H1 (cell line): ENCODE measurements at regions of chr7 and their contacts with region 1.

Region 1: DNA sequence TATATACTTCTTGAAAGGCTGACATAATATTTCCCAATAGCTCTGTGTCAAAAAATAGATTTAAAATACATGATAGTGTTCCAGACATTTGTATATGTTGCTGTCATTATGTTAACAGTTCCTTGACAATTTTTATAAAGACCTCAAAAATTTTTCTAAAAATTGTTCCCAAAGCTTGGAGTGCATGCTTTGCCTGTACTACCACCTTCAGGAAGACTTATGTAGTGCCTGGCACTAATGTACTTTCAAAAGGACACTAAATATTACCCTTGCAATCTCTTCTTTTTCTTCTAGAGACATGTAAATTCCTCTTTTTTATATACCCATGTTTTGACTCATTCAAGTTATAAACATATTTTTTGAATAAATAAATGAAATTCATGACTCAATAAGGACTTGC is 48.0 kb upstream of the SP8 start:
- DNase-seq: no peak
- H3K4me3 ChIP-seq: peak overlapping the region in 1 of 4 experiments; percentile 23; a peak in 1 of 8 replicates
- H3K27ac ChIP-seq: no peak overlapping the region
- H3K4me1 ChIP-seq: peaks cover 0 to 15% (median 7%) of the 10 kb centered on the region in 4 experiments; a peak in 4 of 7 replicates
- H3K27me3 ChIP-seq: no peaks in the 10 kb centered on the region
- CTCF ChIP-seq: peak in 2 of 3 experiments; percentile 39 to 57; a peak in 2 of 4 replicates
- EP300 ChIP-seq: no peak
- POLR2A ChIP-seq: no peak
- RAD21 ChIP-seq: peak; percentile 79 to 84

Region 2: GRCh38 chr7:20778063-20778721 is 56.5 kb before region 1 on chr7:
- CTCF ChIA-PET with region 1: interaction called, 19 read pairs
- POLR2A ChIA-PET with region 1: interaction called, 3 read pairs
- DNase-seq: peak in 1 of 2 experiments; percentile 91
- H3K4me3 ChIP-seq: peak overlapping the region; percentile 27 to 62 (median 58)
- H3K27ac ChIP-seq: peak overlapping the region; percentile 11; the same call in 1 of the 2 replicates
- H3K4me1 ChIP-seq: peaks cover 11 to 29% (median 17%) of the 10 kb centered on the region in 4 experiments
- H3K27me3 ChIP-seq: peaks cover 4 to 13% (median 12%) of the 10 kb centered on the region in 4 experiments
- CTCF ChIP-seq: peak; percentile 78 to 87 (median 85)
- EP300 ChIP-seq: no peak
- POLR2A ChIP-seq: 0 out of 3 replicates have a peak, but pooled peaks of 1 of the 2 experiments have one; percentile 24
- RAD21 ChIP-seq: peak; percentile 87 to 90

Region 3: GRCh38 chr7:20971219-20971618 is 136.6 kb after region 1 on chr7:
- CTCF ChIA-PET with region 1: no interaction called
- POLR2A ChIA-PET with region 1: no interaction called
- DNase-seq: no peak
- H3K4me3 ChIP-seq: no peak overlapping the region
- H3K27ac ChIP-seq: no peak overlapping the region
- H3K4me1 ChIP-seq: no peaks in the 10 kb centered on the region
- H3K27me3 ChIP-seq: no peaks in the 10 kb centered on the region
- CTCF ChIP-seq: no peak
- EP300 ChIP-seq: no peak
- POLR2A ChIP-seq: no peak
- RAD21 ChIP-seq: no peak